Activated naive CD4-positive, alpha-beta T cell treated with anti-CD3 and anti-CD28 coated beads, Interleukin-2, amount 10 ng/mL, durations not matched to agents 7 days and 5 days (primary cell): ENCODE measurements at regions of chr10 and their contacts with region 1.

Region 1: DNA sequence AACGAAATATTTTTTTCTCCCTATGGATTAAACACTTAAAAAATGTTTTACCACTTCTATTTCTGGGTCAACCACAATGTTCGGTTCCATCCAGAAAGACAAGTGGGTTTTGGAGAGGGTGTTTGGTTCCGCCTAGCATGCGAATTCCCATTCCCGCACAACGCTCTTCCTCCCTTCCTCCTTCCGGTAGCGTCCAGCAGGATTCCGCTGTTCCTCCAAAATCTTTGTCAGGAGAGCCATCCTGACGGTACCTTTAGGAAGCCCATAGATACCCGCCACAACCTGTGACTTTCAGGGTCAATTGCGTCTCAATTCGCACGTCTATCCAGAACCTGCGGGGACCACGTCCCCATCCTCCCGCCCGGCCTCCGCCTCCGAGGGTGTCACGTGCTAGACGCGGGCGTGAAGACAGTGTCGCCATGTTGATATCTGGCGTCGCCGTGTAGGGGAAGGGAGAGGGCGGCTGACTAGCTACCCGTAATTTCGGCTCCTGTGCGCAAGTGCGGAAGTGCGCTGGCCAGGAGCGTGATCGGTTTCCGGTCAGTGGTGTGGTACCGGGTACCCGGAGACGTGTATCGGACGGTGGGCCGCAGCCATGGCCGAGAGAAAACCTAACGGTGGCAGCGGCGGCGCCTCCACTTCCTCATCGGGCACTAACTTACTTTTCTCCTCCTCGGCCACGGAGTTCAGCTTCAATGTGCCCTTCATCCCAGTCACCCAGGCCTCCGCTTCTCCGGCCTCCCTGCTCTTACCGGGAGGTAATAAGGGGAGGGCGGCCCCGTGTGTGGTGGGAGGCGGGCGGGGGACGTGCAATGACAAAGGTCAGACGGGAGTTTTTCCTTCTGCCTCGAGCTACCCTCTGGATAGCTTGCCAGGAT is at the start of gene SEC23IP:
- DNase-seq: peak; percentile 95
- H3K4me3 Mint-ChIP-seq: peak within 1 kb of the TSS; percentile 95
- H3K27ac Mint-ChIP-seq: peak within 1 kb of the TSS; percentile 92
- H3K4me1 Mint-ChIP-seq: peaks cover 45% of the 10 kb centered on the region
- H3K27me3 Mint-ChIP-seq: peaks cover 14% of the 10 kb centered on the region

Region 2: DNA sequence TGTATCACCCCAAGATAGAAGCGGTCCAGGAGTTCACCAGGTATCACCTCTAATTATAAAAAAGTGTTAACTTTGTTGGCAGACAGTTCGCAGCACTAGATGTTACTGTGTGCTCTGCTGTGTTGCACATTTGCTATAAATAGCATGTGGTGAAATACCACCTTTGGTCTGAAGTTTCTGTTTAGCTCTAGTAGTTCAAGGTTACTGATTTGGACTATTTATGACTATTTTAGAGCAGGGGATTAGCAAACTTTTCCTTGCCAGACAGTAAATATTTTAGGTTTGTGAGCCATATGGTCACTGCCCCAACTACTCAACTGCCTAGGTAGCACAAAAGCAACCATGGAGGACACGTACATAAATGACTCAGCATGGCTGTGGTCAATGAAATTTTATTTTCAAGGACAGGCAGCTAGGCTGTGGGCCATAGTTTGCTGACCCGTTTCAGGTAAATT is 772.0 kb before region 1 on chr10:
- CTCF ChIA-PET with region 1: no interaction called
- DNase-seq: no peak
- H3K4me3 Mint-ChIP-seq: no peak overlapping the region
- H3K27ac Mint-ChIP-seq: peak overlapping the region; percentile 49
- H3K4me1 Mint-ChIP-seq: peaks cover 11% of the 10 kb centered on the region
- H3K27me3 Mint-ChIP-seq: no peaks in the 10 kb centered on the region

Region 3: DNA sequence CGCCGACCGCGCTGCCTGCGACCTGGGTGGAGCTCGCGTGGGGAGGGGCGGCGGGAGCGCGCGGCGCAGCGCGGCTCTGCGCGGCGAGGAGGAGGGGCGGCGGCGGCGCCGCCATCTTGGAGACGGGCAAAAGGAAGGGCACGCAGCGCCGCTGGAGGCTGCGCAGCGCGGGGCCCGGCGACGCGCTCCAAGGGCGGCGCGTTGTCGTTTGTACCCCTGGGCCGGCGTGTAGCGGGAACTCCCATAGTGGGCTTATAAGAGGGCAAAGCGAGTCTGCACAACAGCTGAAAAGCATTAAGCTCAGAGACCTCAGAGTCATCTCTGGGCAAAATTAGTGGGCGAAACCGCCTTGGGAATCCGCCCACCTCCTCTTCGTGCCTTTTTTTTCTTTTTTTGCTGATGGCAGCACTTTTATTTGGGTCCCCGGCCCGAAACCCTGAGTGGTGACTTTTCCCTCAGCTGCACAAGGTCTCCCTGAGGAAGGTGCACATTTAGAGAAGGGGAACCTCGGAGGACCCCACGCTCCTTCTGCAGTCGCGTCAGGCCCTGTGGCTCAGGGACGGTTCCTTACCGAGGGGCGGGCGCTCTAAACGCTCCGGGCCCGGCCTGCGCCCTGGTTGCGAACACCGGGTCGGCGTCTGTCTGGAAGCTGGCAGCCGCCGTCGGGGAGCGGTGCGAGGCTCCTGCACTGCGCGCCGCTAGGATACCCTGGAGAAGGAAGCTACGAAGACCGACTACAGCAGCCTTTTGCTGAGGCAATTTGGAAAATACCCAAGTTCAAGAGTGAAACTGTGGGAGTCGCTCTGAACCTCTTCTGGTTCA is 19.4 kb before region 1 on chr10:
- CTCF ChIA-PET with region 1: interaction called, 11 read pairs
- DNase-seq: peak; percentile 91
- H3K4me3 Mint-ChIP-seq: peak overlapping the region; percentile 81
- H3K27ac Mint-ChIP-seq: peak overlapping the region; percentile 88
- H3K4me1 Mint-ChIP-seq: peaks cover 44% of the 10 kb centered on the region
- H3K27me3 Mint-ChIP-seq: peaks cover 10% of the 10 kb centered on the region